Dendritic cell treated with granulocyte-macrophage colony-stimulating factor and Interleukin-4, amounts not matched to agents 40 ng/mL and 50 ng/mL, for 4 days (primary cell): ENCODE measurements at regions of chr19 and their contacts with region 1.

Region 1: GRCh38 chr19:40750059-40750873 is at the start of gene ACTMAP:
- H3K4me3 Mint-ChIP-seq: peak within 1 kb of the TSS; percentile 96
- H3K27ac Mint-ChIP-seq: peak within 1 kb of the TSS; percentile 96
- H3K4me1 Mint-ChIP-seq: peaks cover 59% of the 10 kb centered on the region
- H3K27me3 Mint-ChIP-seq: no peaks in the 10 kb centered on the region

Region 2: GRCh38 chr19:40650749-40651305 is 99.4 kb before region 1 on chr19:
- intact Hi-C with region 1: no loop called
- H3K4me3 Mint-ChIP-seq: no peak overlapping the region
- H3K27ac Mint-ChIP-seq: no peak overlapping the region
- H3K4me1 Mint-ChIP-seq: no peaks in the 10 kb centered on the region
- H3K27me3 Mint-ChIP-seq: peaks cover 9% of the 10 kb centered on the region

Region 3: GRCh38 chr19:40716655-40717324 is 33.5 kb before region 1 on chr19 and contains the starts of genes COQ8B and ITPKC:
- intact Hi-C with region 1: loop called (anchors 1 kb)
- H3K4me3 Mint-ChIP-seq: peak within 1 kb of the TSS; percentile 88
- H3K27ac Mint-ChIP-seq: peak within 1 kb of the TSS; percentile 95
- H3K4me1 Mint-ChIP-seq: peaks cover 70% of the 10 kb centered on the region
- H3K27me3 Mint-ChIP-seq: no peaks in the 10 kb centered on the region

Region 4: GRCh38 chr19:40798223-40798996 is 48.1 kb after region 1 on chr19:
- intact Hi-C with region 1: loop called (anchors 2 kb)
- H3K4me3 Mint-ChIP-seq: peak overlapping the region; percentile 87
- H3K27ac Mint-ChIP-seq: peak overlapping the region; percentile 93
- H3K4me1 Mint-ChIP-seq: peaks cover 64% of the 10 kb centered on the region
- H3K27me3 Mint-ChIP-seq: no peaks in the 10 kb centered on the region